ENCODE measurements at regions of chr3 and their contacts with region 1.

Region 1: DNA sequence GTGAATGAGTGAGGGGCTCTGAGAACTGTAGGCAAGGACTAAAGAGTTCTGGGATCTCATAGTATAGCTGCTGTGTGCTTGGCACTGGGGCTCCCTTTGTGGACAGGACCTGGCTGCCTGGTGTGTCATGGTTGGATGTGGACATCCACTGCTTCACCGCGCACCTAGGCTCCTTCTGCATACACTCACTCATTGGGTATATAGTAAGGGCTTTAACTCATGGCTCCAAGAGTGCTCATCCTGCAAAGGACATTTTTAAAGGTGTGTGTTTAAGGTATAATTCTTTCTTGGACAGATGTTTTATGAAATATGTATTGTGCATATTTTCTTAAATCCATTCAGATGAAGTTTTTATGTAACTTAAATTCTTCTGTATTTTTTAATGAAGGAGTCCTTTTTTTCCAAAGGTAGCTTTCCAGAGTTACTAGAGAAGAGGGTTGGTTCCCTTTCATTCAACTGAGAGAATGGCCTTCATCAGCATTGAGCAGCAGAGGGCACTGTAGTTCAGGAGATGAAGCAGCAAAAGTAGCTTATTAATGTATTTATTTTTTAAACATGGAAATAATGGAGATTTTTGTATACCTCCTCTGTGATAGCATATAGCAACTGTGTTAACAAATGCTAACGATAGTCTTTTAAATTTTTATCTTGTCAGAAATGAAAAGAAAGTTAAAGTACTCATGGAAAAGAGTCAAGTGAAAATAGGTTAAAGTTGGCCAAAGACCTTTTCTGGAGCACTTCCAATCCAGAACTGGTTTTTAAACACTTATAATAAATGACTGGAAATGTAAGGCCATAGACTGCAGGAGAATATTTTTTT is 25.2 kb downstream of the OXNAD1 start:
- DNase-seq: peak in 1 of 3 donors; percentile 59
- ATAC-seq: no peak
- H3K4me3 ChIP-seq: no peak overlapping the region
- H3K27ac ChIP-seq: no peak overlapping the region
- H3K4me1 ChIP-seq: peaks cover 21% of the 10 kb centered on the region
- H3K27me3 ChIP-seq: no peaks in the 10 kb centered on the region

Region 2: GRCh38 chr3:16369885-16370284 is 79.7 kb after region 1 on chr3:
- intact Hi-C with region 1: loop called in 1 of 4 experiments (anchors 10 kb)
- DNase-seq: no peak
- ATAC-seq: no peak
- H3K4me3 ChIP-seq: no peak overlapping the region
- H3K27ac ChIP-seq: peak overlapping the region; percentile 8
- H3K4me1 ChIP-seq: peaks cover 25% of the 10 kb centered on the region
- H3K27me3 ChIP-seq: no peaks in the 10 kb centered on the region

Region 3: DNA sequence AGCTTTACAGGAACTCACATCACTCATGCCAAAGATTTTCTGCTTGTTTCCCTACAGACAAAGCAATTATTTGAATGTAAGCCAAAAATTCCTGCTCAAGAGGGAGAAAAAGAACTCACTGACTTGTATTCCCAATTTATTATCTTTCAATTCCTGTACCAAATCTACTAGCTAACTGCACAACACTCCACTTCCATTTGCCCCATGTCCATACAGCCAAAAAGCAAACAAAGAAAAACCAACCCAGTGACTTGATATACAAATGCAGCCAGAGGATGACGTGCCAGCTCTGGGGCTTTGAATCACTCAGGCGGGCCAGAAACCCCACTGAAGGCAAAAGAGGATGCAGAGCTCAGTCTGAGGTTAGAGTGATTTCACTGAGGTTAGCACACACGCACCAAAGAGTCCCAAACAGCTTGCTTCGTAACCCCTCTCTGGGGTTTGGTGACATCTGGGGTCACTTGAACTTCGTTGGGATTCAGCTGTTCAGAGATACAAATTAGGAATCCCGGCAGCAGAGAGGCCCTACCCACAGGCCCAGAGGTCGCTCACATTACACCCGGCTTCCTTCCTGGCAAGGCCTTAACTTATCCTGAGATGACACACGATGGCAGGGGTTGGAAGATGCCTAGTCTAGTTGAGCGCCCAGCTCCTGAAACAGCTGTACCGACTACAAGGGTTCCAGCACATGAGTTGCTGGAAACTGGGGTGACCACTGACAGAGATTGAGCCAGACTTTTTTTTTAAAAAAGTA is 221.6 kb after region 1 on chr3:
- intact Hi-C with region 1: loop called in 1 of 4 experiments (anchors 10 kb)
- DNase-seq: peak; percentile 72 to 87 (median 75)
- ATAC-seq: peak; percentile 54 to 74
- H3K4me3 ChIP-seq: peak overlapping the region; percentile 64
- H3K27ac ChIP-seq: peak overlapping the region; percentile 81
- H3K4me1 ChIP-seq: peaks cover 15% of the 10 kb centered on the region
- H3K27me3 ChIP-seq: no peaks in the 10 kb centered on the region

Region 4: DNA sequence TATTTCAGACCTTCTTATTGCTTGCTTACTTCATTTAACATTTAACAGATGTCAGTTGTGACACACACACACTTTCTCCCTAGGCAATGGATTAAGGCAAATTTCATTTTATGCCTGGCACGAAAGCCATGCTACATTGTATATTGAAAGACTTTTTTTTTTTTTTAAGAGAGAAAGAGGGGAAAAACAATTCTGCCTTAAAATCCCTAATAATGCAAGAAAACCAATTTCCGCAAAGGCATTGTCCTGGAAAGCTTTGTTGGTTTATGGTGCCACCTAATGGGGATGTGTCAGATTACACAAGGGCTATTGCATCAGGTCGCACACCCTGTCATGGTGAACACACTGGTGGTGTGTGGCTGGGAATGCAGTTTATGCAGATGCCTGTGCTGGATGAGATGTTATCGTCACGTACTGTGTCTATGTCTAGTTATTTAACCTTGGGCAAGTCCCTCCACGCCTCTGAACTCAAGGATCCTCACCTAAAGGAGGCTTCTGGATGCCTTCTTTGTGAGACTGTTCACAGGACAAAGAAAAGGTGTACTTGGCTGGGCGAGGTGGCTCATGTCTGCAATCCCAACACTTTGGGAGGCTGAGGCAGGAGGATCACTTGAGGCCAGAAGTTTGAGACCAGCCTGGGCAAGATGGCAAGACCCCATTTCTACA is 260.6 kb after region 1 on chr3:
- intact Hi-C with region 1: loop called (anchors 2 to 5 kb)
- DNase-seq: peak; percentile 42 to 61 (median 60)
- ATAC-seq: peak; percentile 76 to 79
- H3K4me3 ChIP-seq: no peak overlapping the region
- H3K27ac ChIP-seq: no peak overlapping the region
- H3K4me1 ChIP-seq: no peaks in the 10 kb centered on the region
- H3K27me3 ChIP-seq: no peaks in the 10 kb centered on the region